ENCODE measurements at regions of chr6 and their contacts with region 1.

Region 1: DNA sequence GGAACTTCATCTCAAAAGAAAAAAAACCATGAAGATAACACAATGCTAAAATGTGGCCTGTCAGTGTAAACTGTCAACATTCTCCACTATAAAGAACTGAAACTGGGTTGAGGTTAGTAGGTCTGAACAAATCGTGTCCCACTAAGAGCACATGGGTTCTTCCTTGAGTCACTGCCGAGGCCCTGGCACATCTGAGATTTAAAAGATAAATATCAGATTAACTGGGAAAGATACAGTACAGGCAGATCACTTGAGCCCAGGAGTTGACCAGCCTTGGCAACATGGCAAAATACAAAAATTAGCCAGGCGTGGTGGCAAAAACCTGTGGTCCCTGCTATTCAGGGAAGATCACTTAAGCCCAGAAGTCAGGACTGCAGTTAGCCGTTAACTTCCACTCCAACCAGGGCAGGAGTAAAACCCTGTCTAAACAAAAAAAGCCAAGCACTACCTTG is 5.6 kb downstream of the EEF1A1 start:
- DNase-seq: no peak
- ATAC-seq: no peak

Region 2: GRCh38 chr6:73610444-73611275 is 95.4 kb after region 1 on chr6:
- intact Hi-C with region 1: loop called (anchors 1 kb)
- DNase-seq: no peak
- ATAC-seq: no peak

Measured in Right ventricle myocardium inferior (tissue), 1 donor.